Calu3 (cell line): ENCODE measurements at regions of chr6 and their contacts with region 1.

Region 1: GRCh38 chr6:160733050-160733646 is 31.1 kb downstream of the PLG start:
- DNase-seq: peak; percentile 63
- H3K4me3 Mint-ChIP-seq: no peak overlapping the region
- H3K27ac Mint-ChIP-seq: no peak overlapping the region
- H3K4me1 Mint-ChIP-seq: no peaks in the 10 kb centered on the region
- H3K27me3 Mint-ChIP-seq: no peaks in the 10 kb centered on the region
- CTCF ChIP-seq: peak; percentile 50

Region 2: DNA sequence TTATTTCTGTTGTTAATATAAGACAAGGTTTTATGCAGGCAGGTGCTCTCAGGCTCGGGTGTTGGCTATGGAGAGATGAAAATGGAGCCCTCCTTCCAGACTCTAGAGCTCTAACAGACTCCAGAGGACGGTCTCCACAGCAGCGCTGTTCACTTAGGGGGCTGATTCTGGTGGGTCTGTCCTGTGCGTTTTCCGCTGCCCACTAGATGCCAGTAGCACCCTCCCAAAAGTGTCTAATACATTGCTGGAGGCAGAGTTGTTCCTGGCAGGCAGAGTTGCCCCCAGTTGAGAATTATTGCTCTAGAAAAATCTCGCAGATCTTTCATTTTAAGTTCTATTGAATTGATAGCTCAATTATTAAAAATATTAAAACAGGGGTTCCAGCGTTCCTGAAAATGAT is 368.4 kb after region 1 on chr6:
- CTCF ChIA-PET with region 1: no interaction called
- intact Hi-C with region 1: loop called (anchors 10 kb)
- DNase-seq: no peak
- H3K4me3 Mint-ChIP-seq: no peak overlapping the region
- H3K27ac Mint-ChIP-seq: no peak overlapping the region
- H3K4me1 Mint-ChIP-seq: peaks cover 13% of the 10 kb centered on the region
- H3K27me3 Mint-ChIP-seq: no peaks in the 10 kb centered on the region
- CTCF ChIP-seq: no peak